PC-3 (cell line): ENCODE measurements at regions of chr18 and their contacts with region 1.

Region 1: GRCh38 chr18:76405681-76406356 is 89.2 kb downstream of the ZNF516 start:
- DNase-seq: peak; percentile 67
- ATAC-seq: peak; percentile 91
- H3K4me3 ChIP-seq: no peak overlapping the region
- H3K27ac ChIP-seq: no peak overlapping the region
- H3K4me1 ChIP-seq: no peaks in the 10 kb centered on the region
- H3K27me3 ChIP-seq: peaks cover 10% of the 10 kb centered on the region
- CTCF ChIP-seq: peak; percentile 70

Region 2: GRCh38 chr18:76349067-76349715 is 56.6 kb before region 1 on chr18:
- CTCF ChIA-PET with region 1: no interaction called
- POLR2A ChIA-PET with region 1: no interaction called
- intact Hi-C with region 1: no loop called
- DNase-seq: peak; percentile 82
- ATAC-seq: peak; percentile 48
- H3K4me3 ChIP-seq: peak overlapping the region; percentile 58
- H3K27ac ChIP-seq: no peak overlapping the region
- H3K4me1 ChIP-seq: peaks cover 4% of the 10 kb centered on the region; the same call in 1 of the 2 replicates
- H3K27me3 ChIP-seq: 0 out of 2 replicates have a peak, but pooled peaks cover 13% of the 10 kb centered on the region
- CTCF ChIP-seq: peak; percentile 85

Region 3: DNA sequence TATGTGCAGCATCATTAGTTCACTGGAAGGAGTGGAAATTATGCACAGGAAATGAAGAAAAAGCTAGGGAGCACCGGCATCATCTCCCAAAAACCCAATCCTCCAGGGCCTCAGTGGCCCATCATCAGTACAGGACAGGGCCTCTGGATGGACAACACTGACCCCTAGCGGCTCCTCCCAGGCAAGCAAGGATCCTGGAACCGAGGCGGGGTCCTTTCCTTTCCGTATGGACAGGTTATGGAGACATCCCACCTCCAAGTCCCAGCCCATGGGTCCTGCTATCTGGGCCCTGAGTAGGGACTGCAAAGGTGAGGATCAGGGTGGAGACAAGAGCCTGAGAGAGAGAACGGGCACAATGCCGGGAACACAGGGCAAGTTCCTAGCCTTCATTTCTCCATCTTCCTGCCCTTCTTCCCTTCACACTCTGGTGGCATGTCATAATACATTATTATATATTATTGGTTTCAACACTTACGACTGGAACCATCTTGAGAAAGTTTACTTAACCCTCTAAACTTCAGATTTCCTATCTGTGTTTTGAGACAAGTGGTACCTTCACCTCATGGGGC is 21.0 kb after region 1 on chr18:
- CTCF ChIA-PET with region 1: interaction called, 3 read pairs
- POLR2A ChIA-PET with region 1: no interaction called
- intact Hi-C with region 1: loop called (anchors 1 kb)
- DNase-seq: peak; percentile 40
- ATAC-seq: peak; percentile 88
- H3K4me3 ChIP-seq: no peak overlapping the region
- H3K27ac ChIP-seq: no peak overlapping the region
- H3K4me1 ChIP-seq: no peaks in the 10 kb centered on the region
- H3K27me3 ChIP-seq: peaks cover 38% of the 10 kb centered on the region
- CTCF ChIP-seq: peak; percentile 82

Region 4: GRCh38 chr18:76588601-76589226 is 182.9 kb after region 1 on chr18:
- CTCF ChIA-PET with region 1: no interaction called
- POLR2A ChIA-PET with region 1: no interaction called
- intact Hi-C with region 1: no loop called
- DNase-seq: no peak
- ATAC-seq: no peak
- H3K4me3 ChIP-seq: no peak overlapping the region
- H3K27ac ChIP-seq: no peak overlapping the region
- H3K4me1 ChIP-seq: no peaks in the 10 kb centered on the region
- H3K27me3 ChIP-seq: peaks cover 75% of the 10 kb centered on the region
- CTCF ChIP-seq: no peak

Region 5: GRCh38 chr18:76686737-76687262 is 281.0 kb after region 1 on chr18:
- CTCF ChIA-PET with region 1: no interaction called
- POLR2A ChIA-PET with region 1: no interaction called
- intact Hi-C with region 1: loop called (anchors 1 kb)
- DNase-seq: peak; percentile 70
- ATAC-seq: peak; percentile 91
- H3K4me3 ChIP-seq: no peak overlapping the region
- H3K27ac ChIP-seq: no peak overlapping the region
- H3K4me1 ChIP-seq: no peaks in the 10 kb centered on the region
- H3K27me3 ChIP-seq: peaks cover 82% of the 10 kb centered on the region
- CTCF ChIP-seq: peak; percentile 73